Dorsolateral prefrontal cortex (tissue), 120 donors: ENCODE measurements at regions of chr3 and their contacts with region 1.

Region 1: DNA sequence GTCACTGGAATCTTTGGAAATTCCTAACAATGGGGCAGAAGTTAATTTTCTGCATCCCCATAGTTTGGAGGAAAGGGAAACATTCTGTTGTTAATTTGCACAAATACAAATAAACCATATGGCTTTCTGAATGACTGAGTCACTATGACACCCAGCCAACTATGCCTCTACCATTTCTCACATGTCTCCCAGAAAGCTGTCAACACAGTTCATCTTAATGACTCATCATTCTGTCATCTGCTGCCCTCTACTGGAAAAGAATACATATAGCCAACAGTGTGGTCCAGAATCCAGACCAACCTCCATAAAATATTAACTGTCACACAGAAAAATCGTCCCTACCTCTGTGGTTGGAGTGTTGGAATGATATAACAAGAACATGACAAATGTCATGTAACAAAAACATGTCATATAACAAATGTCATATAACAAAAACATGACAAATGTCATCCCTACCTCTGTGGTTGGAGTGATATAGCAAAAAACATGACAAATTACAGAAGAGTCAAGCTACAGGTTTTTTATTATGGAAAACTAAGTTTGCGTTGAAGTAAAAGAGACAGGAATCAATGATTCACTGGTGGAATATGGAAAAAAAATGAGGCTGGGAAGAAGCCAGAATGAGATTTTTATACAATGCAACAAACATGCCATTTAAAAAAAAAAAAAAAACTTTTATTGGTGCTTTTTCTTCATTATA is 47.7 kb upstream of the GYG1 start:
- DNase-seq: peak in 3 of 10 donors; percentile 7 to 57 (median 37)
- H3K4me3 ChIP-seq: no peak overlapping the region
- H3K27ac ChIP-seq: peak overlapping the region in 1 of 59 donors; percentile 14
- H3K27me3 ChIP-seq: no peaks in the 10 kb centered on the region
- CTCF ChIP-seq: peak; percentile 63 to 93 (median 85)

Region 2: DNA sequence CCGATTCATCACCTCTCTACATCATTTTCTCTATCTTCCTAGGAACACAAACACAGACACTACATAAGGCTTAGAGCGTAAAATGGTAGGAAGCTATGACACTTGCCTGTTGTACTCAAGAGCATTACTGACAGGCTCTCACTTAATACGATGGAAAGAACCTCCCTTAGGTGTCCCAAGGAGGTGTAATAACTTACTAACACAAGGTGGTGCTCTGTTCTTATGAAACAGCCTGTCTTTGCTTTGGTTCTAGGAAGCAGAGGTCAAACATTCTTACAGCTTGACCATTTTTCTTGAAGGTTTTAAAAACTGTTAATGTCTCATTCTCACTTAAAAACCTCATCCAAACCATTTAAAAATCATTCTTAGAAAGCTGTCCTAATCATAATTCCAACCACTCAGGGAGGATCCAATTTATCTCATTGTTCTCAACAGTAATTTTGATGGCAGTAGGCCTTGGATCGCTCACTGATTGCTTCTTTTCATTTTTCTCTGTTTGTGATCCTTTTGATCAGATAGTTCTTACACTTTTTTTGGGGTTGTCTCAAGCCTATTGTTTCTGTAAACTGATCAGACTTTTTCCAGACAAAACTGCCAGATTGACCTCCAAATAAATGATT is 563.8 kb before region 1 on chr3:
- intact Hi-C with region 1: loop called in 1 of 2 experiments (anchors 5 kb)
- DNase-seq: no peak
- H3K4me3 ChIP-seq: no peak overlapping the region
- H3K27ac ChIP-seq: no peak overlapping the region
- H3K27me3 ChIP-seq: no peaks in the 10 kb centered on the region
- CTCF ChIP-seq: peak in 52 of 56 donors; percentile 19 to 72 (median 44)

Region 3: GRCh38 chr3:148790851-148791735 is 152.6 kb before region 1 on chr3:
- intact Hi-C with region 1: loop called in 1 of 2 experiments (anchors 5 kb)
- DNase-seq: peak in 8 of 10 donors; percentile 42 to 84 (median 54)
- H3K4me3 ChIP-seq: peak overlapping the region in 55 of 59 donors; percentile 1 to 64 (median 37)
- H3K27ac ChIP-seq: peak overlapping the region; percentile 57 to 99 (median 94)
- H3K27me3 ChIP-seq: no peaks in the 10 kb centered on the region
- CTCF ChIP-seq: peak in 4 of 56 donors; percentile 9 to 15 (median 11)

Region 4: DNA sequence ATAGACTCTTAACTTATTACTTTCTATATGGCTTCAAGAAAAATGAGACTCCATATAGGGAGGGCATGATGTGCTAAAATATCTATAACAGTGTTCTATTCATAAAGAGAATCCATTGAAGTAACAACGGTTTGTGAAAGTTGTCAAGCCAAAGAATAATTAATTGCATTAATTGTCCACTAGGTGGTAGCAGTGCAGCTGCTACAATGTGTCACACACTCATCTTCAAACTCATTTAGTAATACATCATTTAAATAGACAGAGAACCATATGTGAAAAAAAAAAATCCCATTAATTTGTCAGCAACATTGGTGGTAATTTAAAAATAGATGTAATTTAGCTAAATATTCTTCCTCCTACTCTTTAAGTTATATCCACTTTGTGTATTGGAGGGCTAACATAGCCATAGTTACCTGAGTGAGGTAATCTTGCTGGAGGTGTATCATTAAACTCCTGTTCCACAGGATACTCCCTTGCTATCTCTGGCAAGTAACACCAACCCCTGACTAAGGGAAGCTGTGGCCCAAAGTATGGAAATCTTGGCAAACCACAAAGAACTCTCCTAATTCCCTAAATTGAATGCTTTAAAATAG is 82.3 kb before region 1 on chr3:
- intact Hi-C with region 1: loop called (anchors 2 to 5 kb)
- DNase-seq: no peak
- H3K4me3 ChIP-seq: no peak overlapping the region
- H3K27ac ChIP-seq: no peak overlapping the region
- H3K27me3 ChIP-seq: peaks cover 0 to 2% (median 0%) of the 10 kb centered on the region in 45 donors
- CTCF ChIP-seq: peak; percentile 64 to 95 (median 79)